ENCODE measurements at regions of chr3 and their contacts with region 1.

Region 1: DNA sequence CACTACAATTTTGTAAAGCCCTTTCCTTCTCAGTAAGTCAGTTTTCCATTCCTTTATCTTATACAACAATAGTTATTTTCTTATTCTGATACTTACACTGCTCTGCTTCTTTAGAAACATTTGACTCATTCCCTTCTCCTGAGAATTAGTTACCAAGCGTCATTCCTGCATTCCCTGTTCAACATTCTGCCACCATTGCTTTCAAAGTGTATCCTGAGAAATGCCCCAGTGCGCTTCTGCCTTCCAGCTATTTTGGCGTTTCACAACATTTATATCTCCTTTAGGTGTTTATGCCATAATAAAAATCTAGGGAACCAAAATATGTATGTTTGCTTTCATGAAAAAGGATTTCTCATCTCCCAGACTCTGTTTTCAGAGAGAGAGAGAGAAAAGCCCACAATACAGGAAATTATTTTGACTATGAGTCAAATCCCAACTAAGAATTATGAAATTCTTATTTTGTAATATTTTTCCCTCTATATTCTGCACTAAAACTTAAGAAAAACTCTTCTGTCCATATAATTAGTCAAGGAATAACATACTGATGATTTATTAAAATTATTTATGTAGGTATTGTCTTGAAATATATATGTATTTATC is 118.2 kb upstream of the RAP2B start:
- DNase-seq: no peak
- ATAC-seq: no peak
- H3K4me3 ChIP-seq: no peak overlapping the region
- H3K27ac ChIP-seq: no peak overlapping the region
- H3K4me1 ChIP-seq: peaks cover 10 to 32% of the 10 kb centered on the region in 2 experiments; a peak in 3 of 4 replicates
- H3K27me3 ChIP-seq: no peaks in the 10 kb centered on the region
- CTCF ChIP-seq: no peak
- POLR2A ChIP-seq: no peak
- RAD21 ChIP-seq: no peak

Region 2: DNA sequence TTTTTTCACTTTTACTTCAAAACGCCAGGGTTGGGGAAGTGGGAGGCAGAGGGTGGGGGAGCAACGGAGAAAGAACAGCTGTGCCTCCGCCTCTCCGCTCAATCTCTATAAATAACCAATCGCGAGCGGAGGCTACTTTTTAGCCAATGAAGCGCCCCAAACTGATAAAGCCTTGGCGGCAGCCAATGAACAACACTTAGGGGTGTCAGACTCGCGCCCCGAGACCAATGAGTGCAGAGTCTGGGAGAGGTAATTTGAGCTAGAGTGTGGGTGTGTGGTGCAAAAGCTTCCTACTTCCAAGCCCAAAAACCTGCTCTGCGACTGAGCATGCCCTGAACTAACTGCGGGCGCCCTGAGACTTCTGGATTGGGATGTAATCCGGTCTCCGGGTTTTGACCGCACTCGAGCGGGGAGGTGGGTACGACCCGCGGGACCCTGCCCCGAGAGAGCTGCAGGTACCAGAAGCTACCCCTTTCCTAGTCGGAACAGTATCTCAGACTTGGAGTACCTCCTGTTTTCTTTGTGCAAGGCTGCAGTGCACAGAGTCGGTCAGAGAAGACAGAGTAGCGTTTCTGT is 117.4 kb after region 1 on chr3:
- CTCF ChIA-PET with region 1: interaction called, 12 read pairs
- POLR2A ChIA-PET with region 1: interaction called, 8 read pairs
- RAD21 ChIA-PET with region 1: interaction called, 4 read pairs
- intact Hi-C with region 1: loop called (anchors 1 kb)
- DNase-seq: peak; percentile 99
- ATAC-seq: peak; percentile 82
- H3K4me3 ChIP-seq: peak overlapping the region; percentile 79 to 80
- H3K27ac ChIP-seq: peak overlapping the region; percentile 92
- H3K4me1 ChIP-seq: peaks cover 20 to 46% of the 10 kb centered on the region in 2 experiments
- H3K27me3 ChIP-seq: no peaks in the 10 kb centered on the region
- CTCF ChIP-seq: no peak
- POLR2A ChIP-seq: no peak
- RAD21 ChIP-seq: no peak

Region 3: DNA sequence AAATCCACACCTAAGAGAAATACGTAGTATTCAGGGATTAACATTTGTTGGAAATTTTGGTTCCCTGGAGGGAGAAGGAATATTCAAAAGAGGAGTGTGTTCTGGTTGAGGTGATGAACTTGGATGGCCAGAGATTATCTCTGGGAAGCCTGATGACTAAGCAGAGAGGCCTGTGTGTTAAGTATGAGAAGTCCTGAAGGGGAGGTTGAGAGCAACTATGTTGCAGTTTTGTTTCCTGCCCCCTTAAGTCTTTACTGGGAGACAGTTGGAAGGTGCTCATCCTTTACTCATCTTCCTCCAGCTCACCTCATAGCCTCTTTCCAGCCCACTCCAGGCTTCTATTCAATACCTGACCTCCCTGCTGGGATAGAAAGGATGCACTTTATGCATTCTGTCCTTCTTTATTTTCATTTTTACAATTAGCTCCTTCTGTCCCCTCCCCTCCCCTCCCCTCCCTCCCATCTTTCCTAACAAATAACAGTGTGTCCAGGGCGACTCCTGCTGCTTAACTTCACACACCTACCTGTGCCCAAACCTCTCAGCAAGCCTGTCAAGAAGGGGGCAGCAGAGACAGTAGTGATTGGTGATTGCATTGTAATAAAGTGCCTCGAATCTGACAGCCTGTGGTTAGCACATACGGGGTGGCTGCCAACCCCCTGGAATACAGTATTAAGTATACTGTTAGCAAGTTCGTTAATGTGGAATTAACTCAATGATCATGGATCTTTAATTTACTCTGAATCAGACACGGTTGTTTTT is 130.1 kb after region 1 on chr3:
- CTCF ChIA-PET with region 1: interaction called, 12 read pairs
- POLR2A ChIA-PET with region 1: no interaction called
- RAD21 ChIA-PET with region 1: interaction called, 3 to 4 read pairs
- intact Hi-C with region 1: no loop called
- DNase-seq: peak; percentile 52
- ATAC-seq: peak; percentile 97
- H3K4me3 ChIP-seq: no peak overlapping the region
- H3K27ac ChIP-seq: no peak overlapping the region
- H3K4me1 ChIP-seq: peaks cover 4 to 16% of the 10 kb centered on the region in 2 experiments
- H3K27me3 ChIP-seq: no peaks in the 10 kb centered on the region
- CTCF ChIP-seq: peak; percentile 36 to 98 (median 46)
- POLR2A ChIP-seq: no peak
- RAD21 ChIP-seq: peak; percentile 78

Region 4: GRCh38 chr3:153291056-153291685 is 247.3 kb after region 1 on chr3:
- CTCF ChIA-PET with region 1: interaction called, 5 read pairs
- POLR2A ChIA-PET with region 1: interaction called, 3 read pairs
- RAD21 ChIA-PET with region 1: interaction called in 1 of 2 experiments, 7 read pairs
- intact Hi-C with region 1: loop called (anchors 1 kb)
- DNase-seq: peak; percentile 44
- ATAC-seq: peak; percentile 98
- H3K4me3 ChIP-seq: no peak overlapping the region
- H3K27ac ChIP-seq: no peak overlapping the region
- H3K4me1 ChIP-seq: peaks cover 0 to 13% of the 10 kb centered on the region in 2 experiments; a peak in 2 of 4 replicates
- H3K27me3 ChIP-seq: no peaks in the 10 kb centered on the region
- CTCF ChIP-seq: peak; percentile 55 to 75 (median 57); a peak in 5 of 6 replicates
- POLR2A ChIP-seq: no peak
- RAD21 ChIP-seq: peak; percentile 71

Region 5: DNA sequence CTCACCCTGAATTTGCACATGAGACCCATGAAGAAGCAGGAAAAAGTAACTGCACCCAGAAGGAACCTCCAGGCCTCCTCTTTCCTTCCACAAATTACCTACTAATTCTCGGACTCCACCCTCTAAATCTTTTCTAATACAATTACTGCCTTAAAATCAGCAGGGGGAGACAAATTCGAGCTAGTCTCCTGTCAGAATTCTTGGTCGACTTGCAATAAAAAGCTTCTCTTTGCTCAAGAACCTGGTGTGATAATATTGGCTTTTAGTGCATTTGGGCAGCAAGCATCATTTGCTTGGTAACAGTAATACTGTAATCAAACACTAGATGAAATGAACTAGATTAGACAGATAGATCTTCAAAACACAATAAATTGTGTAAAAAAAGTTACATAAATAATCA is 400.1 kb after region 1 on chr3:
- CTCF ChIA-PET with region 1: no interaction called
- POLR2A ChIA-PET with region 1: no interaction called
- RAD21 ChIA-PET with region 1: no interaction called
- intact Hi-C with region 1: loop called (anchors 5 kb)
- DNase-seq: peak; percentile 10
- ATAC-seq: no peak
- H3K4me3 ChIP-seq: no peak overlapping the region
- H3K27ac ChIP-seq: no peak overlapping the region
- H3K4me1 ChIP-seq: no peaks in the 10 kb centered on the region
- H3K27me3 ChIP-seq: no peaks in the 10 kb centered on the region
- CTCF ChIP-seq: peak; percentile 18 to 48 (median 27); a peak in 4 of 6 replicates
- POLR2A ChIP-seq: no peak
- RAD21 ChIP-seq: peak; percentile 54; the same call in 1 of the 2 replicates

Region 6: GRCh38 chr3:153595186-153595815 is 551.5 kb after region 1 on chr3:
- CTCF ChIA-PET with region 1: no interaction called
- POLR2A ChIA-PET with region 1: no interaction called
- RAD21 ChIA-PET with region 1: no interaction called
- intact Hi-C with region 1: loop called (anchors 5 kb)
- DNase-seq: peak; percentile 24
- ATAC-seq: peak; percentile 88
- H3K4me3 ChIP-seq: no peak overlapping the region
- H3K27ac ChIP-seq: no peak overlapping the region
- H3K4me1 ChIP-seq: peaks cover 0 to 9% of the 10 kb centered on the region in 2 experiments; a peak in 2 of 4 replicates
- H3K27me3 ChIP-seq: no peaks in the 10 kb centered on the region
- CTCF ChIP-seq: peak; percentile 79 to 85 (median 85)
- POLR2A ChIP-seq: no peak
- RAD21 ChIP-seq: peak; percentile 86

Region 7: GRCh38 chr3:153768561-153769469 is 725.0 kb after region 1 on chr3:
- CTCF ChIA-PET with region 1: no interaction called
- POLR2A ChIA-PET with region 1: no interaction called
- RAD21 ChIA-PET with region 1: no interaction called
- intact Hi-C with region 1: loop called (anchors 5 kb)
- DNase-seq: peak; percentile 47
- ATAC-seq: peak; percentile 97
- H3K4me3 ChIP-seq: no peak overlapping the region
- H3K27ac ChIP-seq: no peak overlapping the region
- H3K4me1 ChIP-seq: no peaks in the 10 kb centered on the region
- H3K27me3 ChIP-seq: no peaks in the 10 kb centered on the region
- CTCF ChIP-seq: peak; percentile 46 to 84 (median 79); a peak in 5 of 6 replicates
- POLR2A ChIP-seq: no peak
- RAD21 ChIP-seq: peak; percentile 84

Measured in HCT116 (cell line).